ENCODE measurements at regions of chr12 and their contacts with region 1.

Region 1: DNA sequence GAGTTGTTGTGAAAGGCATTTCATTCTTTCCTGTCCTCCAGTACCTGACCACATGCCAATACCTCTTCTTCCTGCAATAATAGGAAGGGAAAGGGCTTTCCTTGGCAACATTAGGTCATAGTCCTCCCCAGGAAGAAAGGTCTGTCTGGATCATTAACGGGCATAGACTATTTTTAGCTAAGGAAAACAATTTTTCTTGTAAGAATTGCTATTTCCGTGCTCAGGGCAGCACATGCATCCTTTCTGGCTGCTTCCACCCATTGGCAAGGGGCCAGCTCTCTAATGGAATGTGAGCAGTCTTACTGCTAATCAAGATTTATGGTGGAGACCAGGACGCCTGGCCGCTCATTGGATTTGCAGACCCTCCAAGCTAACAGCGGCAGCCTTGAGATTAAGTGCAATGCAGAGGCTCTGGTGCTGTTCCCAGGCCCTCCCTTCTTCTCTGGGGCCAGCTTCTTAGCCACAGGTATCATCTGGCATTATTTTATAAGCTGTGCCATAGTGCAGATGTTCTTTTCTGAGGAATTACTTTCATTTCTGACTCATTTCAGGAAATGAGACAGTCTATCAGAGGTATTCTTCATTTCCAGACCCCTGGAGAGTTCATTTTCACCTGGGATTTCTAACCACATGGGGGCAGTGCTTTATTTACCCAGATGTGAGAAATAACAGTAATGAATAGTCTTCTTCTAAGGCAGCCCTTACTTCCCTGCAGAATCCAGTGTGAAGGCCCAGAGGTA is 52.9 kb downstream of the ANO6 start:
- DNase-seq: peak; percentile 53 to 96
- H3K4me3 ChIP-seq: peak overlapping the region; percentile 22 to 39
- H3K27ac ChIP-seq: peak overlapping the region; percentile 75 to 87
- H3K4me1 ChIP-seq: peaks cover 8 to 56% of the 10 kb centered on the region in 2 donors
- H3K27me3 ChIP-seq: no peaks in the 10 kb centered on the region
- CTCF ChIP-seq: peak; percentile 25 to 56 (median 32)

Region 2: DNA sequence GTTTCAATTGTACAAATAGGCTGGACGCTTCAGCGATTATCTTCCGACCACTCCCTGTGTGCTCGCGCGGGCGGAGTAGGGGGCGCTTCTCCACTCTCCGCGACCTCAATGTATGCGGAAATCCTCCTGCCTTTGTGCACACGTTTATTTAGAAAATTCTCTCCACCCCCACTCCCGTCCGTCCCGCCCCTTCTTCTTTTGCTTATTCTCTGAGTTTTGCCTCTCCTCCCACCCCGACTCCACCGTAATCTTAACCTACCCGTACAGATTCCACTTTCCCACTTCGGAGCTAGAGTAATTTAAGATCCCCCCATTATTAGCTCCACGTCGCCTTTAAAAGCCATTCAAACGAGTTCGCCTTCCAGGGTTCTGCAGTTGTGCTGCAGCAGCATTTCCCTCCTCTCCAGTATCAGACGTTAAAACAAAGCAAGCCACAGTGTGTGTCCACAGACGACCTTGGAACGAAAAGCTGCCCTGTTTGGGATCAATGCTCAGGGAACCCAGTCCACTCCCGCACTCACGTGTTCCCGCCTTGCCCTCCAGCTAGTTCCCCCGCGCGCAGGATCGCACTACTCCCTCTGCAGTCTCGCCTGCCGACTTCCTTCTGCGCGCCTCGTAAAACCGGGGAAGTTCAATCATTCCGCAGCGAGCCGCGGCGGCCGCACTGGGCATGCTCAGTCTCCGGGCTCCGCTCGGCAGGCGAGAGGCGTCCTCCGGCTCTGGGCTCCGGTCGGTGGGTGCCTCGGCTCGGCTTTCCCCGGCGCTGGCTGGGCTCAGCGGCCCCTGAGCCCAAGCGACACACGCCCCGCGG is 53.2 kb before region 1 on chr12 and contains the start of gene ANO6:
- intact Hi-C with region 1: loop called (anchors 2 kb)
- DNase-seq: peak; percentile 53 to 95
- H3K4me3 ChIP-seq: peak within 1 kb of the TSS; percentile 85 to 93
- H3K27ac ChIP-seq: peak within 1 kb of the TSS; percentile 92 to 97
- H3K4me1 ChIP-seq: peaks cover 6 to 11% of the 10 kb centered on the region in 2 donors
- H3K27me3 ChIP-seq: no peaks in the 10 kb centered on the region
- CTCF ChIP-seq: peak in 2 of 3 experiments; percentile 12 to 22
- total RNA-seq, gene ANO6: 49.6 TPM

Region 3: DNA sequence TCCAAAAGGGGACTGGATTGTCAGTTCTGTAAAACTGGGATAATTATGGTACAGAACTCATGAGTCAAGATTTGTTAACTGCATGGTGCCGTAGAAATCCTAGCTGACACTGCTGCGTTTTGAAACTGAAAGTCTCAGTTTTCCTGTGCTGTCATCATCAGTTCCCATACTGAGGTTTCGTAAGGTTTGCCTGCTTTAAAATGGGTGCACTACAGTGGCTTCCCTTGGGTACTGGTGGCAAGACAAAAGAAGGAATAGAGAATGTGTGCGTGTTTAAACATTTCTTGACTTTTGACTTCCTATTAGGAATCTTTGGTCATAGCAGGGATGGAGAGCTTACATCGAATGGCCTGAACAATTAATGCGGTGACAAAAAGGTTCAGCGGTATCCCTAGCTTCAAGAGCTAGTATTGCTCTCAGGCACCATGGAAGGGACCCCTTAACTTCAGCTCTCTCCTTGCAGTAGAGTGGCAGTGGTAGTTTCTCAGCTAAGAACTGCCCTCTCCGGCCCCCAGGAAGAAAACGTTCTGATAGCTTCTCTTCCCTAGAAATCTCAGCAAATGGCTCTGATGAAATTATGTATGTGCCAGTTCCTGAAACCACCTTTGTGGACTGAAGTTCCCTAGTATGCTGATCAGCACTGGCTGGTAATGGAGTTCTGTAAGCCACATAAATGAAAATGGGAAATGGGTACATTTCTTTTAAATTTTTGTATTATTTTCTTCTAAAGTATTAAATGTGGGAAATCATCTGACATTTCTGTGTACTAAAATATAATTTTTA is 24.1 kb before region 1 on chr12:
- intact Hi-C with region 1: loop called (anchors 2 kb)
- DNase-seq: no peak
- H3K4me3 ChIP-seq: peak overlapping the region; percentile 21 to 56
- H3K27ac ChIP-seq: peak overlapping the region; percentile 85 to 87
- H3K4me1 ChIP-seq: peaks cover 4 to 61% of the 10 kb centered on the region in 2 donors
- H3K27me3 ChIP-seq: no peaks in the 10 kb centered on the region
- CTCF ChIP-seq: no peak

Region 4: DNA sequence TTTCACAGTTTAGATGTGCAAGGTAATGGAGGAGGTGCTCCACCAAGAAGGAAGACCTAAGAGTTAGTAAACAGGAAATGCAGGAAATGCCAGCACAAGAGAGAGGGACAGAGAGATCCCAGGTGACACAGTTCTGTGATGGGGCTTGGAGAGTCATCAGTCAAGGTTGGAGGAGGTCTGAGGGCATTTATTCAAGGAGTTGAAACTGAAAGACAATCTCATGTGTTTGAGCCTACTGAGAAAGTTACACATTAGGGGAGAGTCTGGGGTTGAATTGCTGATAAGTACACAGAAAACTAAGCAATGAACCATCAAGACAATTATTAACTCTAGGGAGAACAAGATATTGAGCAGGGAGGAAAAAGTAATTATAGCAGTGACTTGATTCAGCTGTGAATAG is 85.6 kb after region 1 on chr12:
- intact Hi-C with region 1: loop called (anchors 5 kb)
- DNase-seq: no peak
- H3K4me3 ChIP-seq: no peak overlapping the region
- H3K27ac ChIP-seq: peak overlapping the region in 1 of 2 donors; percentile 15
- H3K4me1 ChIP-seq: peaks cover 6 to 37% of the 10 kb centered on the region in 2 donors
- H3K27me3 ChIP-seq: no peaks in the 10 kb centered on the region
- CTCF ChIP-seq: no peak

Region 5: GRCh38 chr12:45728630-45729232 is 459.9 kb after region 1 on chr12:
- intact Hi-C with region 1: loop called (anchors 10 kb)
- DNase-seq: peak; percentile 88 to 98
- H3K4me3 ChIP-seq: peak overlapping the region; percentile 74 to 95
- H3K27ac ChIP-seq: peak overlapping the region; percentile 99
- H3K4me1 ChIP-seq: peaks cover 0 to 26% of the 10 kb centered on the region in 2 donors
- H3K27me3 ChIP-seq: no peaks in the 10 kb centered on the region
- CTCF ChIP-seq: peak; percentile 89 to 97 (median 93)

Measured in ascending aorta (tissue), 2 donors.